Activated T-helper 1 cell treated with anti-CD3 and anti-CD28 coated beads, Interleukin-12 subunit alpha, Interleukin-12 subunit beta, Interleukin-2, Interleukin-4 antibody, amounts not matched to agents 30 ng/mL and 10 ng/mL and 1 ng/mL, durations not matched to agents 14 hours and 24 hours and 36 hours (primary cell): ENCODE measurements at regions of chr3 and their contacts with region 1.

Region 1: GRCh38 chr3:15601397-15602145 is at the starts of genes BTD and HACL1:
- DNase-seq: peak; percentile 97
- H3K4me3 Mint-ChIP-seq: peak within 1 kb of the TSS; percentile 99
- H3K27ac Mint-ChIP-seq: peak within 1 kb of the TSS; percentile 99
- H3K4me1 Mint-ChIP-seq: peaks cover 51% of the 10 kb centered on the region
- H3K27me3 Mint-ChIP-seq: no peaks in the 10 kb centered on the region
- total RNA-seq, gene BTD: 2.6 and 3.5 TPM in 2 replicates
- total RNA-seq, gene HACL1: 21.4 and 24.8 TPM in 2 replicates

Region 2: GRCh38 chr3:14651440-14652251 is 949.9 kb before region 1 on chr3 and contains the start of gene CCDC174:
- intact Hi-C with region 1: loop called (anchors 1 kb)
- DNase-seq: peak; percentile 94
- H3K4me3 Mint-ChIP-seq: peak within 1 kb of the TSS; percentile 99
- H3K27ac Mint-ChIP-seq: peak within 1 kb of the TSS; percentile 90
- H3K4me1 Mint-ChIP-seq: peaks cover 38% of the 10 kb centered on the region
- H3K27me3 Mint-ChIP-seq: peaks cover 4% of the 10 kb centered on the region
- total RNA-seq, gene CCDC174: 16.6 and 21.7 TPM in 2 replicates

Region 3: DNA sequence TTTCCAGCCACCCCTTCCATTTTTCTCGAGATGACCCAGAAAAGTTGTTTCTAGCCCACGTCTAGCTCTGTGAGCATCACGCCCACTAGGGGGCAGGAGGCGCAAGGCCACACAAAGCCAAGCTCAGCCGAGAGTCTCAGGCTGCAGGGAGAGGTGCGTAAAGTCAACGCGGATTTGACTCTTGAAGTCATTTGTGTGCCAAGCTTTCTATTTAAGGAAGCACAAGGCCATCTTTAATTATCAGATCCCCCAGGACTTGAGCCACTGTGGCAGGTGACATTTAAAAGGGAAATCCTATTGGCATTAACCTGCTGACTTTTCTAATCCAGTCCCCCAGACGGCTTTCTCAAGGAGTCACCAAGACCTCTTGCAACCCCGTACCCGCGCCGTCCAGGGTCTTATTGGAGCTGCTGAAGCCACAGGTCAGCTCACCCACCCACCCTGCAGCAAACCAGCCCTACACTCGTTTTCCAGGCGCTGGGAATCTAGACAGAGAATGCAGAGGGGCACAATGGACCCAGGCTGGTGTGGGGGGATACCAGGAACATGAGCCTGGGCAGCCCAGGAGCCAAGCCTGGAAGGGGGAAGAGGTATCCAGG is 333.4 kb before region 1 on chr3:
- intact Hi-C with region 1: loop called (anchors 2 kb)
- DNase-seq: peak; percentile 74
- H3K4me3 Mint-ChIP-seq: no peak overlapping the region
- H3K27ac Mint-ChIP-seq: no peak overlapping the region
- H3K4me1 Mint-ChIP-seq: peaks cover 73% of the 10 kb centered on the region
- H3K27me3 Mint-ChIP-seq: no peaks in the 10 kb centered on the region

Region 4: DNA sequence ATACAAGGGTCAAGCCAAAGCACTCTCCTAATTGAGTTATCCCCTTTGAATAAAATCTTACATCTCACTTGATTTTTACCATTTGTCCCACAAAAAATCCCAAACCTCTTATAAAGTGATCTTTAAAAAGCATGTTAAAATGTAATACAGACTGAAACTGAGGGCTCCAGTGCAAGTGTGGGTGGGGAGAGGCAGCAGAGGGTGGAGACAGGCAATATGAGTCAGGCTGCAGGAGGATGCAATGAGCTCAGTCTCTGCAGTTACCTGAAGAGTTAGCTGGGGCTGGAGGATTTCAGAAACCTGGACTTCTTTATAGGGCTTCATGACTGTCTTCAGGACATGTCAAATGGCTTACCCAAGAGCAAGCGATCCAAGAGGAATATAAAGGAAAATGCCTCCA is 65.8 kb before region 1 on chr3:
- intact Hi-C with region 1: loop called (anchors 2 kb)
- DNase-seq: peak; percentile 32
- H3K4me3 Mint-ChIP-seq: peak overlapping the region; percentile 60
- H3K27ac Mint-ChIP-seq: peak overlapping the region; percentile 75
- H3K4me1 Mint-ChIP-seq: peaks cover 55% of the 10 kb centered on the region
- H3K27me3 Mint-ChIP-seq: no peaks in the 10 kb centered on the region

Region 5: GRCh38 chr3:15743587-15744009 is 142.0 kb after region 1 on chr3:
- intact Hi-C with region 1: loop called (anchors 2 kb)
- DNase-seq: no peak
- H3K4me3 Mint-ChIP-seq: no peak overlapping the region
- H3K27ac Mint-ChIP-seq: peak overlapping the region; percentile 55
- H3K4me1 Mint-ChIP-seq: peaks cover 51% of the 10 kb centered on the region
- H3K27me3 Mint-ChIP-seq: no peaks in the 10 kb centered on the region

Region 6: GRCh38 chr3:16264708-16265454 is 663.3 kb after region 1 on chr3 and contains the starts of genes DPH3 and OXNAD1:
- intact Hi-C with region 1: loop called (anchors 10 kb)
- DNase-seq: peak; percentile 99
- H3K4me3 Mint-ChIP-seq: peak within 1 kb of the TSS; percentile 97
- H3K27ac Mint-ChIP-seq: peak within 1 kb of the TSS; percentile 100
- H3K4me1 Mint-ChIP-seq: peaks cover 35% of the 10 kb centered on the region
- H3K27me3 Mint-ChIP-seq: no peaks in the 10 kb centered on the region
- total RNA-seq, gene DPH3: 28.1 and 36.6 TPM in 2 replicates
- total RNA-seq, gene OXNAD1: 29.5 and 31.1 TPM in 2 replicates